HAP-1 (cell line): ENCODE measurements at regions of chr12 and their contacts with region 1.

Region 1: DNA sequence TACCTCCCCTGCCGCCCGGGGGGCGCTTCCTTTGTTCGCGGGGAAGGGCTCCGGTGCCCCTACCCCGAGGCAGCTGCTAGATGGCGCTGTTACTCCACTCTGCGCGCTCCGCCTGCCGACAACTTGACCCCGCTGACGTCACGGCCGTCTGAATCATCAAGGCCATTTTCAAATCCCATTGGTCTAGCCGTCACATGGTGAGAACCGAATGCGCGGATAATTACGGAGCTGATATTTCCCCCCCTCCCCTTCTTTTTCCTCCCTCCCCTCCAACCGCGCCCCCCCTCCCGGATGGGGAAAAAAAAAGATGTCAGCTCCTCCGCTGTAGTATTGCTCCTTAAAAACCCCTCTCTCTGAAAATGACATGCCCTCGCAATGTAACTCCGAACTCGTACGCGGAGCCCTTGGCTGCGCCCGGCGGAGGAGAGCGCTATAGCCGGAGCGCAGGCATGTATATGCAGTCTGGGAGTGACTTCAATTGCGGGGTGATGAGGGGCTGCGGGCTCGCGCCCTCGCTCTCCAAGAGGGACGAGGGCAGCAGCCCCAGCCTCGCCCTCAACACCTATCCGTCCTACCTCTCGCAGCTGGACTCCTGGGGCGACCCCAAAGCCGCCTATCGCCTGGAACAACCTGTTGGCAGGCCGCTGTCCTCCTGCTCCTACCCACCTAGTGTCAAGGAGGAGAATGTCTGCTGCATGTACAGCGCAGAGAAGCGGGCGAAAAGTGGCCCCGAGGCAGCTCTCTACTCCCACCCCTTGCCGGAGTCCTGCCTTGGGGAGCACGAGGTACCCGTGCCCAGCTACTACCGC is at the start of gene HOXC10:
- DNase-seq: peak; percentile 90 to 96
- H3K4me3 ChIP-seq: peak within 1 kb of the TSS; percentile 18
- H3K4me1 ChIP-seq: peaks cover 21% of the 10 kb centered on the region
- H3K27me3 ChIP-seq: 0 out of 2 replicates have a peak, but pooled peaks cover 2% of the 10 kb centered on the region

Region 2: DNA sequence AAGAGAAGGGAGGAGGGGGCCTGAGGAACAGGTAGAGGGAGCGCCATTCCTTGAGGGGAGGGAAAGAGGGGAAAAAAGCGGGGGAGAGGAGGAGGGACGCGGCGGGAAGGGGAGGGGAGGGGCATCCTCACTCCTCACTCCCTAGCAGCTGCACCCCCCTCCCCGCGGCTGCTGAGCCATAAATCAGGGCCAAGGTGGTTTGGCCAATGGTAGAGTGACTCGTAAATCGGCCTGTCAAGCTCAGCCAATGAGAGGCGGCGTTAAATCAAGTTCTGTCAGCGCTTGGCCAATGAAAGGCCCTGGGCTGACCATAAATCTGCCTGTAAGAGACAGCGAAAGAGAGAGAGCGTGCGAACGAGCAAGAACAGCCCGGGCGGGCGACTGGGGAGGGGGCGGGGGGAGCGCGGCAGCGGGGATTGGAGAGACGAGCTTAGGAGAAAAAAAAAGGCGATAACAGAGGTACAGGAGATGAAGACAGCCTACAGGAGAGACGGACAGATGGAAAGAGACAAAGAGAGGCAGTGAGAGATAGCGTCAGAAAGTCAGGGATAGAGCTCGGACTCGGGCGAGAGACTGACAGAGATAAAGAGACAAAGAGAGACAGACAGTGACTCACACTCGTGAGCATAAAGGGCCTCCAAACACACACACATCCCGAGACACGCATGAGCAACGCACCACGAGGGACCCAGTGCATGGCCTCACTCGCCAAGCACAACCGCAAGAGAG is 374.1 kb after region 1 on chr12:
- in situ Hi-C with region 1: loop called (anchors 25 kb)
- DNase-seq: peak; percentile 98 to 99
- H3K4me3 ChIP-seq: peak overlapping the region; percentile 42
- H3K4me1 ChIP-seq: peaks cover 31% of the 10 kb centered on the region
- H3K27me3 ChIP-seq: no peaks in the 10 kb centered on the region